WTC11 (cell line): ENCODE measurements at regions of chr1 and their contacts with region 1.

Region 1: DNA sequence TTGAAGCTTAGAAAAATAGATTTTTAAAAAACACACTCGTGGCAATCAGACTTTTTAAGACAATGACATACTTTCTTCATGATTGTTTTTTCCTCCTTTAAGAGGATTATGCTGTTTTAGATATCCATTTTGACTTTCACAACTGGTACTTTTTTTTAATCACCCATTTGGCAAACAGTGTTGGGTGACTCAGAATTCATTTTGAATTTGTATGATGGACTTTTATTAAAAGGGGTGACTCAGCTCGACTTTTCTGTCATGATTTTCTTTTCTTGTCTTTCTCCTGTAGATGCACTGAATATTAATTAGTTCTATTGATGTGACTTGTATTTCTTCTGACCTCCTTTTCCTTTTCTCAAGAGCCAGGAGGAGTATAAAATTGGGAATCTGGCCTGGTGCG is 44.7 kb downstream of the FMN2 start:
- DNase-seq: no peak
- ATAC-seq: no peak
- H3K4me3 Mint-ChIP-seq: no peak overlapping the region
- H3K27ac Mint-ChIP-seq: no peak overlapping the region
- H3K4me1 Mint-ChIP-seq: peaks cover 23% of the 10 kb centered on the region
- H3K27me3 Mint-ChIP-seq: no peaks in the 10 kb centered on the region
- CTCF ChIP-seq: no peak

Region 2: DNA sequence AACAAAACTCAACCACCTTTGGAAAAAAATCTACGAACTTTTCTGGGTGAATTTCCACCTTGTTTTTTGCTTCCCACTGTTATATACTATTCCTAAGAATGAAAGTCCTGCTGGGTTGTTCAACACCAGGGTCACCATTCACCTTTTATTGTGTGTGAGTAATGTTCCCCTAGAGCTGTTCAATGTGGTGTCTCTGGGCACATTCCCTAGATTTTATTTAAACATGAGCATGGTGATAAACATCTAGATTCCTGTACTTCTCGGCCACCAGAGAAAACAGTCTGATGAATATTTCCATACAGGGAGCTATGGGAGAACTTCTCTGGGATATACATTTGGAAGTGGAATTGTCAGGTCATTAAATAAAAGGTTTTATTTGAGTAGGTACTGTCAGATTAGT is 31.7 kb before region 1 on chr1:
- CTCF ChIA-PET with region 1: no interaction called
- POLR2A ChIA-PET with region 1: no interaction called
- DNase-seq: no peak
- ATAC-seq: no peak
- H3K4me3 Mint-ChIP-seq: no peak overlapping the region
- H3K27ac Mint-ChIP-seq: no peak overlapping the region
- H3K4me1 Mint-ChIP-seq: peaks cover 15% of the 10 kb centered on the region
- H3K27me3 Mint-ChIP-seq: no peaks in the 10 kb centered on the region
- CTCF ChIP-seq: no peak

Region 3: GRCh38 chr1:240149484-240150094 is 13.2 kb after region 1 on chr1:
- CTCF ChIA-PET with region 1: interaction called, 10 read pairs
- POLR2A ChIA-PET with region 1: interaction called, 3 read pairs
- DNase-seq: no peak
- ATAC-seq: peak; percentile 34; the same call in 1 of the 2 replicates
- H3K4me3 Mint-ChIP-seq: no peak overlapping the region
- H3K27ac Mint-ChIP-seq: no peak overlapping the region
- H3K4me1 Mint-ChIP-seq: peaks cover 2% of the 10 kb centered on the region; the same call in 1 of the 2 replicates
- H3K27me3 Mint-ChIP-seq: no peaks in the 10 kb centered on the region
- CTCF ChIP-seq: peak; percentile 54; the same call in 1 of the 2 replicates

Region 4: GRCh38 chr1:240164742-240165141 is 28.3 kb after region 1 on chr1:
- CTCF ChIA-PET with region 1: no interaction called
- POLR2A ChIA-PET with region 1: interaction called, 10 read pairs
- DNase-seq: no peak
- ATAC-seq: no peak
- H3K4me3 Mint-ChIP-seq: no peak overlapping the region
- H3K27ac Mint-ChIP-seq: no peak overlapping the region
- H3K4me1 Mint-ChIP-seq: no peaks in the 10 kb centered on the region
- H3K27me3 Mint-ChIP-seq: no peaks in the 10 kb centered on the region
- CTCF ChIP-seq: no peak

Region 5: GRCh38 chr1:240280560-240281322 is 144.3 kb after region 1 on chr1:
- CTCF ChIA-PET with region 1: no interaction called
- POLR2A ChIA-PET with region 1: no interaction called
- DNase-seq: no peak
- ATAC-seq: no peak
- H3K4me3 Mint-ChIP-seq: no peak overlapping the region
- H3K27ac Mint-ChIP-seq: no peak overlapping the region
- H3K4me1 Mint-ChIP-seq: no peaks in the 10 kb centered on the region
- H3K27me3 Mint-ChIP-seq: no peaks in the 10 kb centered on the region; the same call in 1 of the 2 replicates
- CTCF ChIP-seq: no peak